ENCODE measurements at regions of chr11 and their contacts with region 1.

Region 1: GRCh38 chr11:69101115-69101791 is 52.5 kb downstream of the TPCN2 start:
- DNase-seq: peak; percentile 58 to 88 (median 76)
- ATAC-seq: peak; percentile 96
- H3K4me3 ChIP-seq: no peak overlapping the region
- H3K4me3 Mint-ChIP-seq: no peak overlapping the region
- H3K27ac ChIP-seq: no peak overlapping the region
- H3K27ac Mint-ChIP-seq: peak overlapping the region in 1 of 9 donors; percentile 26
- H3K4me1 ChIP-seq: peaks cover 0 to 7% of the 10 kb centered on the region in 2 donors
- H3K4me1 Mint-ChIP-seq: peaks cover 2 to 18% (median 5%) of the 10 kb centered on the region in 7 donors
- H3K27me3 ChIP-seq: no peaks in the 10 kb centered on the region
- H3K27me3 Mint-ChIP-seq: peaks cover 0 to 3% (median 0%) of the 10 kb centered on the region in 5 donors

Region 2: GRCh38 chr11:69122642-69123431 is 21.6 kb after region 1 on chr11:
- CTCF ChIA-PET with region 1: interaction called, 3 read pairs
- POLR2A ChIA-PET with region 1: no interaction called
- intact Hi-C with region 1: loop called in 1 of 2 experiments (anchors 1 kb)
- DNase-seq: peak in 8 of 9 donors; percentile 51 to 78 (median 60)
- ATAC-seq: peak; percentile 85
- H3K4me3 ChIP-seq: peak overlapping the region; percentile 53
- H3K4me3 Mint-ChIP-seq: peak overlapping the region; percentile 69 to 86 (median 81)
- H3K27ac ChIP-seq: peak overlapping the region; percentile 76
- H3K27ac Mint-ChIP-seq: peak overlapping the region; percentile 80 to 94 (median 88)
- H3K4me1 ChIP-seq: peaks cover 4 to 42% of the 10 kb centered on the region in 2 donors
- H3K4me1 Mint-ChIP-seq: peaks cover 24 to 57% (median 40%) of the 10 kb centered on the region in 7 donors
- H3K27me3 ChIP-seq: no peaks in the 10 kb centered on the region
- H3K27me3 Mint-ChIP-seq: no peaks in the 10 kb centered on the region

Region 3: GRCh38 chr11:69157156-69157821 is 56.0 kb after region 1 on chr11:
- CTCF ChIA-PET with region 1: no interaction called
- POLR2A ChIA-PET with region 1: no interaction called
- intact Hi-C with region 1: no loop called
- DNase-seq: no peak
- ATAC-seq: no peak
- H3K4me3 ChIP-seq: no peak overlapping the region
- H3K4me3 Mint-ChIP-seq: no peak overlapping the region
- H3K27ac ChIP-seq: no peak overlapping the region
- H3K27ac Mint-ChIP-seq: no peak overlapping the region
- H3K4me1 ChIP-seq: no peaks in the 10 kb centered on the region
- H3K4me1 Mint-ChIP-seq: no peaks in the 10 kb centered on the region
- H3K27me3 ChIP-seq: no peaks in the 10 kb centered on the region
- H3K27me3 Mint-ChIP-seq: peaks cover 0 to 3% (median 0%) of the 10 kb centered on the region in 5 donors

Region 4: GRCh38 chr11:69211920-69212571 is 110.8 kb after region 1 on chr11:
- CTCF ChIA-PET with region 1: interaction called, 10 read pairs
- POLR2A ChIA-PET with region 1: no interaction called
- intact Hi-C with region 1: no loop called
- DNase-seq: no peak
- ATAC-seq: no peak
- H3K4me3 ChIP-seq: no peak overlapping the region
- H3K4me3 Mint-ChIP-seq: peak overlapping the region in 2 of 10 donors; percentile 19 to 25
- H3K27ac ChIP-seq: no peak overlapping the region
- H3K27ac Mint-ChIP-seq: no peak overlapping the region
- H3K4me1 ChIP-seq: no peaks in the 10 kb centered on the region
- H3K4me1 Mint-ChIP-seq: peaks cover 5 to 29% (median 11%) of the 10 kb centered on the region in 7 donors
- H3K27me3 ChIP-seq: no peaks in the 10 kb centered on the region
- H3K27me3 Mint-ChIP-seq: peaks cover 0 to 10% (median 0%) of the 10 kb centered on the region in 5 donors

Region 5: DNA sequence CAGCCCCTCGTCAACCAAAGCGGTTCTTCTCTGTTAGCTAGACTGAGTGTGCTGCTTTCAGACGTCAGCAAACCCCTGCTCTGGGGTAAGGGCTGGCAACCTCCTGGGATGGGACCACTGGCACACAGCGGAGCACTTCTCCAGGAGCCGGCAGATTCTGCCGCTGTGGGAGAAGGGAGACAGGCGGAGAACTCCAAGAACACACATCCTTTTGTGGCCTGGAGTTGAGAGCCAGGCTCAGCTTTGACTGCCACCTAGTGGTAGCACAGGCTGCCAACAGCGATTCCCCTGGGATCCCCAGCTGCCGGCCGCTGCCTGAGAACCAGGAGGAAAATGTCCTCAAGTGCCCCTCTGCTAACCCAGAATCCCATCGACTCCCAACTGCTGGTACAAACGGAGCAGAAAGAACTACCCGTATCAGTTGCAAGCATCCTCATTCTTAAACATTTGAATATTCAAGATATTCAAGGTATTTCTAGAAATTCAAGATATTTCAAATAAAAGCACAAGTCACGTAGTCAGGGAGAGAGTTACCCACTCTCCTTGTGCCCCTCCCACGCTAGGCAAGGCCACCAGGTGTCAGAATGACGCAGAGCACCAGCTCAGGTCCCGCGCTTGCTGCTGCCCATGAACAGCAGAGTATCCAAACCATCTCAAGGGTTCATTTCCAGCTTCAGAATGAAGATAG is 569.0 kb after region 1 on chr11:
- CTCF ChIA-PET with region 1: interaction called, 5 read pairs
- POLR2A ChIA-PET with region 1: interaction called, 3 read pairs
- intact Hi-C with region 1: loop called (anchors 1 kb)
- DNase-seq: peak; percentile 25 to 57 (median 43)
- ATAC-seq: peak; percentile 36
- H3K4me3 ChIP-seq: no peak overlapping the region
- H3K4me3 Mint-ChIP-seq: no peak overlapping the region
- H3K27ac ChIP-seq: no peak overlapping the region
- H3K27ac Mint-ChIP-seq: peak overlapping the region in 6 of 9 donors; percentile 5 to 84 (median 65)
- H3K4me1 ChIP-seq: peaks cover 15 to 19% of the 10 kb centered on the region in 2 donors
- H3K4me1 Mint-ChIP-seq: peaks cover 24 to 42% (median 33%) of the 10 kb centered on the region in 7 donors
- H3K27me3 ChIP-seq: no peaks in the 10 kb centered on the region
- H3K27me3 Mint-ChIP-seq: peaks cover 0 to under 1% (median 0%) of the 10 kb centered on the region in 5 donors

Measured in naive thymus-derived CD4-positive, alpha-beta T cell (primary cell).